CD8-positive, alpha-beta T cell (primary cell): ENCODE measurements at regions of chr10 and their contacts with region 1.

Region 1: DNA sequence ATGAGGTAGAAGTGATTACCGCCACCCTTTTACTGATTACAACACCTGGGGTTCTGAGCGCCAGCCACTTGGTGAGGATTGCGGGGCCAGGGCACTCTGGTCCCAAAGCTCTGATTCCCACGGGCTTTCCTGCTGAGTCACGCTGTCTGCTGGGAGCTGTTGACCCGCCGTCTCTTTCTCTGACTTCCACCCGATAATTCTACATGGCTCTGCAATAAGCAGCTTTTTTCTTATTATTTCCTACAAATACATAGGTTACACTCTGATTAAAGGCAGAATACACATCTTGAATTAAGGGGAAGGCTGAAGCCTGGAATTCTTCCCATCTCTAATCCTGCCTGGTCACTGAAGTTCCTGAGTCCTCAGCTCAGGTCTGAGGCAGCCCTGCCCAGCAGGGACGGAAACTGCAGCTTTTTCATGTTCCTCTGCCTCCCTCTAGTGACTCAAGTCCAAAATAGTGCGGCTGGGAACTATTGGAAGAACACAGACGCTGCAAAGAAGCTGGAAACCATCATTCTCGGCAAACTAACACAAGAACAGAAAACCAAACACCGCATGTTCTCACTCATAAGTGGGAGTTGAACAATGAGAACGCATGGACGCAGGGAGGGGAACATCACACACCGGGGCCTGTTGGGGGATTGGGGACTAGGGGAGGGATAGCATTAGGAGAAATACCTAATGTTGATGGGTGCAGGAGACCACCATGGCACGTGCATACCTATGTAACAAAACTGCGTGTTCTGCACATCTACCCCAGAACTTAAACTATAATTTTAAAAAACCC is 178.3 kb downstream of the PRKCQ start:
- DNase-seq: peak in 8 of 9 experiments; percentile 40 to 83 (median 62)
- ATAC-seq: peak; percentile 92
- H3K4me3 ChIP-seq: no peak overlapping the region
- H3K4me3 Mint-ChIP-seq: no peak overlapping the region
- H3K27ac ChIP-seq: no peak overlapping the region
- H3K27ac Mint-ChIP-seq: no peak overlapping the region
- H3K4me1 ChIP-seq: peaks cover 6% of the 10 kb centered on the region
- H3K4me1 Mint-ChIP-seq: peaks cover 16% of the 10 kb centered on the region
- H3K27me3 ChIP-seq: peaks cover 0 to 2% of the 10 kb centered on the region in 2 experiments
- H3K27me3 Mint-ChIP-seq: no peaks in the 10 kb centered on the region
- CTCF ChIP-seq: peak; percentile 70

Region 2: GRCh38 chr10:6088721-6089390 is 312.9 kb before region 1 on chr10 and contains the start of gene RBM17:
- CTCF ChIA-PET with region 1: interaction called, 23 read pairs
- POLR2A ChIA-PET with region 1: interaction called, 3 read pairs
- intact Hi-C with region 1: loop called in 1 of 2 experiments (anchors 1 kb)
- DNase-seq: peak; percentile 96 to 99 (median 97)
- ATAC-seq: peak; percentile 88
- H3K4me3 ChIP-seq: peak within 1 kb of the TSS; percentile 82 to 83
- H3K4me3 Mint-ChIP-seq: peak within 1 kb of the TSS; percentile 96
- H3K27ac ChIP-seq: peak within 1 kb of the TSS; percentile 24 to 54
- H3K27ac Mint-ChIP-seq: peak within 1 kb of the TSS; percentile 86
- H3K4me1 ChIP-seq: peaks cover 47% of the 10 kb centered on the region
- H3K4me1 Mint-ChIP-seq: peaks cover 52% of the 10 kb centered on the region
- H3K27me3 ChIP-seq: no peaks in the 10 kb centered on the region
- H3K27me3 Mint-ChIP-seq: peaks cover 1% of the 10 kb centered on the region
- CTCF ChIP-seq: peak; percentile 100
- total RNA-seq, gene RBM17: 151 to 160 TPM

Region 3: DNA sequence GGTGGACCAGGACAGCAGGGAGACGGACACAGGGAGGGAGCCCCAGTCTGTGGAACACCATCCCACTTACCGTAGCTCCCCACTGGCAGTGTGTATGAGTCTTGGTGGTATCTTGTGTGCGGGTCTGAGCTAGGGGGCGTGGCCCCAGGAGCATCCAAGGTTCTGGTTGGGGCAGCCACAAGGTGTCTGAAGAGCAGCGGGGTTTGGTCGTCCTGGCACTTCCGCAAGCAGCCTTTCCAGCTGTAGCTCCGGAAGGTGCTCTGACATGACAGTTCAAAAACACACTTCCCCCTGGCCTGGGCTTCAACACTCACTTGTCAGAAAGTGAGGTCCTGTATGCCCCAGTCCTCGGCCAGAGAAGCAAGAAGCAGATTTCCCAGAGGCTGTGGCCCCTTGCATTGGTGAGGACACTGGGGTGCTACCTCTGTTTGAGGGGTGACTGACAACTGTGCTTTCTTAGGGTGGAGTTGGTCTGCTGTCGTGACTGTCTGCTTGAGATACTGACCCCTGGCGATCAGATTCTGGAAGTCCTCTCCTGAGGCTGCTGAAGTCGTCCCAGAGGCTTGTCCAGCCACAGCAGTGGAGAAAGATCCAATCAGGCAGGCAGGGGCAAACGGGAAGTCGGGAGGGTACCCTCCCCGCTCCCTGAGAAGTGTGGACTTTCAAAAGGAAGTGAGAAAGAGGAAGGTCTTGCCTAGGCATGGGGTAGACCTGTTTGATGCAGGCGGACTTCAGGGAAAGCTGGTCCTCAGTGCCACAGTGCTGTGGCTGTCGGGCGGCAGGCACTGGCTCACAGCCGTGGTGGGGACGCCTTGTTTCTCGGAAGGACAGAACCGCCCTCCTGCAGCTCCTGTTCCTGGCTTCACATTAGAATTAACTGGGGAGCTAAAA is 250.4 kb before region 1 on chr10:
- CTCF ChIA-PET with region 1: interaction called, 19 read pairs
- POLR2A ChIA-PET with region 1: no interaction called
- intact Hi-C with region 1: loop called in 1 of 2 experiments (anchors 5 kb)
- DNase-seq: peak in 7 of 9 experiments; percentile 21 to 78 (median 54)
- ATAC-seq: peak; percentile 69
- H3K4me3 ChIP-seq: peak overlapping the region in 1 of 2 experiments; percentile 12
- H3K4me3 Mint-ChIP-seq: peak overlapping the region; percentile 70
- H3K27ac ChIP-seq: peak overlapping the region in 1 of 2 experiments; percentile 49
- H3K27ac Mint-ChIP-seq: peak overlapping the region; percentile 84
- H3K4me1 ChIP-seq: peaks cover 35% of the 10 kb centered on the region
- H3K4me1 Mint-ChIP-seq: peaks cover 53% of the 10 kb centered on the region
- H3K27me3 ChIP-seq: no peaks in the 10 kb centered on the region
- H3K27me3 Mint-ChIP-seq: no peaks in the 10 kb centered on the region
- CTCF ChIP-seq: peak; percentile 37

Region 4: GRCh38 chr10:6195846-6196245 is 205.9 kb before region 1 on chr10:
- CTCF ChIA-PET with region 1: interaction called, 144 read pairs
- POLR2A ChIA-PET with region 1: no interaction called
- intact Hi-C with region 1: no loop called
- DNase-seq: no peak
- ATAC-seq: no peak
- H3K4me3 ChIP-seq: no peak overlapping the region
- H3K4me3 Mint-ChIP-seq: no peak overlapping the region
- H3K27ac ChIP-seq: no peak overlapping the region
- H3K27ac Mint-ChIP-seq: no peak overlapping the region
- H3K4me1 ChIP-seq: no peaks in the 10 kb centered on the region
- H3K4me1 Mint-ChIP-seq: peaks cover 17% of the 10 kb centered on the region
- H3K27me3 ChIP-seq: no peaks in the 10 kb centered on the region
- H3K27me3 Mint-ChIP-seq: no peaks in the 10 kb centered on the region
- CTCF ChIP-seq: no peak

Region 5: DNA sequence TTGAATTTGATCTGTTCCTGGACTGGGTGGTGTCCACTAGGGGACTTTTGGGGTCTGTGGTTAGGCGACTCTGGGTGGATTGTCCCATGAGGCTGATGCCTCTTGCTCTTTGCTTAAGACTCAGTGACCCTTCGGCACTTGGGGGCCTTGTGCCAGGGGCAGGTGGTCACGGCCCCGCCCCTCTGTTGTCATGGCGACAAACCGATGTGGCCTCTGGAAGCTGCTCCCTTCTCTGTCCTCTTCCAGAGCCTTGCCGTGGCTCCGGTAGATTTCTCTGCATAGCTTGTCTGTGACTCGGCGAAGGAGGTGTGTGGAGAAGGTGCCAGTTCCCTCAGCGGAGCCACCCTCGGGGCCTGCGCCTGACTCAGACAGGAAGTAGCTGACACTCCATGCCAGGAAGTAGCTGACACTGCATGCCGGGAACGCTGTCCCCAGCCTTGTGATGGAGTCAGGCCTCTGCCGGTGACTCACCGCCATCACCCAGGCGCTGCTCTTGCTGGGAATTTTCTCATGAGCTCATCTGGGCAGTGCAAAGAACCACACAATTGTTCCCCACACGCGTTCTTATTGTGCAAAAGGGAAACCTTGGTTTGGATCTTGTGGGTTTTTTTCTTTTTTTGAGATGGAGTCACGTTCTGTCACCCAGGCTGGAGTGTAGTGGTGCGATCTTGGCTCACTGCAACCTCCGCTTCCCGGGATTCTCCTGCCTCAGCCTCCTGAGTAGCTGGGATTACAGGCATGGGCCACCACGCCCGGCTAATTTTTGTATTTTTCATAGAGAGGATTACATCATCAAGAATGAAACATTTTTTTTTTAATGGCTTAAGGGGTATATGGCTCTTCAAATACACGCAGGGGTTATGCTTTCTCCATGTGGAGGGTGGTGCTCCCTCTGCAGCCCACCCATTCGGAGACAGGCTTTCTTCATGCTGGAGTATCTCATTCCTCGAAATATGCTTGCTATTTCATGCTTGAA is 126.4 kb before region 1 on chr10:
- CTCF ChIA-PET with region 1: interaction called, 5 read pairs
- POLR2A ChIA-PET with region 1: no interaction called
- intact Hi-C with region 1: loop called in 1 of 2 experiments (anchors 10 kb)
- DNase-seq: peak; percentile 73 to 97 (median 84)
- ATAC-seq: peak; percentile 86
- H3K4me3 ChIP-seq: peak overlapping the region in 1 of 2 experiments; percentile 37
- H3K4me3 Mint-ChIP-seq: peak overlapping the region; percentile 61
- H3K27ac ChIP-seq: peak overlapping the region; percentile 39 to 86
- H3K27ac Mint-ChIP-seq: peak overlapping the region; percentile 92
- H3K4me1 ChIP-seq: peaks cover 31% of the 10 kb centered on the region
- H3K4me1 Mint-ChIP-seq: peaks cover 42% of the 10 kb centered on the region
- H3K27me3 ChIP-seq: no peaks in the 10 kb centered on the region
- H3K27me3 Mint-ChIP-seq: no peaks in the 10 kb centered on the region
- CTCF ChIP-seq: no peak

Region 6: GRCh38 chr10:6382081-6382480 is 19.7 kb before region 1 on chr10:
- CTCF ChIA-PET with region 1: interaction called, 32 read pairs
- POLR2A ChIA-PET with region 1: no interaction called
- intact Hi-C with region 1: no loop called
- DNase-seq: peak in 8 of 9 experiments; percentile 20 to 71 (median 54)
- ATAC-seq: peak; percentile 89
- H3K4me3 ChIP-seq: peak overlapping the region in 1 of 2 experiments; percentile 12
- H3K4me3 Mint-ChIP-seq: peak overlapping the region; percentile 74
- H3K27ac ChIP-seq: no peak overlapping the region
- H3K27ac Mint-ChIP-seq: peak overlapping the region; percentile 73
- H3K4me1 ChIP-seq: peaks cover 15% of the 10 kb centered on the region
- H3K4me1 Mint-ChIP-seq: peaks cover 24% of the 10 kb centered on the region
- H3K27me3 ChIP-seq: no peaks in the 10 kb centered on the region
- H3K27me3 Mint-ChIP-seq: no peaks in the 10 kb centered on the region
- CTCF ChIP-seq: no peak